Naive thymus-derived CD4-positive, alpha-beta T cell (primary cell): ENCODE measurements at regions of chr1 and their contacts with region 1.

Region 1: DNA sequence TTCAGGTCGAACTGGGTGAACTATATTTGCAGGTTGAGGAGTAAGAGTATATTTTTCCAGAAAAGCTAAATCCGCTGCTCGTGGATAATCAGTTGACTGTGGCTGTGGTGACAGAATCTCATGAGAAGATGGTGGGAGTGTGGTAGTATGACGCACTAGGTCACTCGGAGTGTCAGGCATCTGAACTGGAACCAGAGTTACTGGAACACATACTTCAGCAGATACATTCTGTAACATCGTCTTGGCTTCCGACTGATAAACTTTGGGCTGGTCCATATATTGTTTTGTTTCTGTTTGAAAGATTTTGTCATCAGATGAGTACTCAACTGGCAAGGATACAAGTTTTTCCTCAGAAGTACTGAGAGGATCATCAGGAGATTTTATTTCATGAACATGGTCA is 13.0 kb upstream of the ASPM start:
- DNase-seq: no peak
- ATAC-seq: no peak
- H3K4me3 ChIP-seq: no peak overlapping the region
- H3K4me3 Mint-ChIP-seq: no peak overlapping the region
- H3K27ac ChIP-seq: no peak overlapping the region
- H3K27ac Mint-ChIP-seq: no peak overlapping the region
- H3K4me1 ChIP-seq: no peaks in the 10 kb centered on the region
- H3K4me1 Mint-ChIP-seq: peaks cover 0 to 10% (median 0%) of the 10 kb centered on the region in 7 donors
- H3K27me3 ChIP-seq: no peaks in the 10 kb centered on the region
- H3K27me3 Mint-ChIP-seq: no peaks in the 10 kb centered on the region

Region 2: DNA sequence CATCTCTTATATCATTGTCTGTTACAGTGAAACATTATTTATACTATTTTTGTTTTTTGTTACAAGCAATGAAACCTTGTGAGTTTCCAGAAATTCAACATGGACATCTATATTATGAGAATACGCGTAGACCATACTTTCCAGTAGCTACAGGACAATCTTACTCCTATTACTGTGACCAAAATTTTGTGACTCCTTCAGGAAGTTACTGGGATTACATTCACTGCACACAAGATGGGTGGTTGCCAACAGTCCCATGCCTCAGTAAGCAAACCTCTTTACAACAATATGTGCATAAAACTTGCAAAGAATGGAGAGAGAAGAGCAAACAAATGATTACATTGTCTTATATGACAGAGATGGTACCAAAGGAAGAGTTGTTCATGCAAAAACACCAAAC is 249.2 kb before region 1 on chr1:
- CTCF ChIA-PET with region 1: no interaction called
- POLR2A ChIA-PET with region 1: no interaction called
- intact Hi-C with region 1: no loop called
- DNase-seq: no peak
- ATAC-seq: no peak
- H3K4me3 ChIP-seq: no peak overlapping the region
- H3K4me3 Mint-ChIP-seq: no peak overlapping the region
- H3K27ac ChIP-seq: no peak overlapping the region
- H3K27ac Mint-ChIP-seq: no peak overlapping the region
- H3K4me1 ChIP-seq: no peaks in the 10 kb centered on the region
- H3K4me1 Mint-ChIP-seq: no peaks in the 10 kb centered on the region
- H3K27me3 ChIP-seq: no peaks in the 10 kb centered on the region
- H3K27me3 Mint-ChIP-seq: peaks cover 0 to 7% (median 0%) of the 10 kb centered on the region in 5 donors

Region 3: DNA sequence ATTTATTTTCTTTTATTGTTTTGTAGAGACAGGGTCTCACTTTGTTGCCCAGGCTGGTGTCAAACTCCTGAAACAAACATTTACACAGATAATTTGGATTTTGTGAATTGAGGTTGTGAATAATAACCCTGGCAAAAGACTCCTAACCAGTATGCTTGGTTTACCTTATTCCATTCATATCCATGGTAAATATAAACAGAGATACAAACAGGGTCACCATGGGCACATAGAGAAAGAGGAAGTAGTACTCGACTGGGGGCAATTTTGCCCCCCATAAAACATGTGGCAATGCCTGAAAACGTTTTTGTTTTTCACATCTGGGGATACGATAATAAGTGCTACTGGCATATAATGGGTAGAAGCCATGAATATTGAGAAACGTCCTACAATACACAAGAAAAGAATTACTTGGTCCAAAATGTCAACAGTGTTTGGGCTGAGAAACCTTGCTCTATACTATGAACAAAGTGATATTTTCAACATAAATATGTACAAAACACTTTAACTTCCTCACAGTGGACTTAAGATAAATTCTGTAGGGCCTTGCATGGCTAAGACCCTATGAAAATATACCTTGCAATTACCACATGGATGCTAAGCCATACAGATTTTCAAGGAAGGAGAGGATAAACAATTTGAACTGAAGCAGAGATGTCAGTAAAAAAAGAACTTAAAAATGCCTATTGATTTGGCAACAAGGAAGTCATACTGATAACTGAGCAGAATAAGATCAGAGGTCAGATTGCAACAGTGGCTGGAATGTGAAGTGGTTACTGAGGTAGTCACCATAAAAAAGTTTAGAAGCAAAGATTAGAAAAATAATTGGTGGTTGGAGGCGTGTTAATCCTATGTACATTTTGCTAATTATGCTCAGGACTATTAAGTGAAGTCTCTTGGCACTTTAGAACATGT is 14.4 kb after region 1 on chr1:
- CTCF ChIA-PET with region 1: no interaction called
- POLR2A ChIA-PET with region 1: no interaction called
- intact Hi-C with region 1: loop called in 1 of 2 experiments (anchors 2 kb)
- DNase-seq: no peak
- ATAC-seq: peak; percentile 37
- H3K4me3 ChIP-seq: no peak overlapping the region
- H3K4me3 Mint-ChIP-seq: no peak overlapping the region
- H3K27ac ChIP-seq: no peak overlapping the region
- H3K27ac Mint-ChIP-seq: peak overlapping the region in 4 of 9 donors; percentile 3 to 74 (median 26)
- H3K4me1 ChIP-seq: no peaks in the 10 kb centered on the region
- H3K4me1 Mint-ChIP-seq: peaks cover 0 to 13% (median 0%) of the 10 kb centered on the region in 7 donors
- H3K27me3 ChIP-seq: no peaks in the 10 kb centered on the region
- H3K27me3 Mint-ChIP-seq: no peaks in the 10 kb centered on the region